ENCODE measurements at regions of chr3 and their contacts with region 1.

Region 1: GRCh38 chr3:45043728-45044299 is 17.7 kb downstream of the CLEC3B start:
- DNase-seq: no peak

Region 2: GRCh38 chr3:45210308-45211041 is 166.7 kb after region 1 on chr3:
- CTCF ChIA-PET with region 1: interaction called, 52 read pairs
- POLR2A ChIA-PET with region 1: interaction called, 3 read pairs
- DNase-seq: peak; percentile 77

Measured in HEK293T (cell line).